PC-3 (cell line): ENCODE measurements at regions of chr15 and their contacts with region 1.

Region 1: DNA sequence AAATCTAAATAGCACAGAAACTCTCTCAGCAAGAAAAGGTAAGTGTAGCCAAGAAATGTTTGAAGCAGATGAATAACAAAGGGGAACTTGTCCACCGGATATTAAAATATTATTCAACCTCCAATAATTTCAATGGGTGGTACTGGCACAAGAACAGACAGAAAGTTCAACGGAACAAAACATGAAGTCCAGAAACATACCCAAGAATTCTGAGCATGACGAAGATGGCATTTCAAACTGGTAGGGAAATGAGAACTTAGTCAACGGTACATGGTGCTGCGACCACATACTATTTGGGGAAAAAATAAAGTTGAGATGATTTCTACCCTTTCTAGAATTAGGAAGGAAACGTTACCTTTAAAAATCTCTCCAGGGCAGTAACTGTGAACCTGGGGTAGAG is 5.5 kb downstream of the CHSY1 start:
- DNase-seq: no peak
- ATAC-seq: no peak
- H3K4me3 ChIP-seq: no peak overlapping the region
- H3K27ac ChIP-seq: no peak overlapping the region
- H3K4me1 ChIP-seq: peaks cover 11% of the 10 kb centered on the region
- H3K27me3 ChIP-seq: no peaks in the 10 kb centered on the region
- CTCF ChIP-seq: no peak

Region 2: GRCh38 chr15:101092156-101092866 is 154.1 kb before region 1 on chr15:
- CTCF ChIA-PET with region 1: no interaction called
- POLR2A ChIA-PET with region 1: no interaction called
- intact Hi-C with region 1: no loop called
- DNase-seq: no peak
- ATAC-seq: no peak
- H3K4me3 ChIP-seq: no peak overlapping the region
- H3K27ac ChIP-seq: no peak overlapping the region
- H3K4me1 ChIP-seq: no peaks in the 10 kb centered on the region
- H3K27me3 ChIP-seq: no peaks in the 10 kb centered on the region
- CTCF ChIP-seq: no peak

Region 3: GRCh38 chr15:101221902-101222301 is 24.5 kb before region 1 on chr15:
- CTCF ChIA-PET with region 1: no interaction called
- POLR2A ChIA-PET with region 1: interaction called, 16 read pairs
- intact Hi-C with region 1: no loop called
- DNase-seq: no peak
- ATAC-seq: no peak
- H3K4me3 ChIP-seq: no peak overlapping the region
- H3K27ac ChIP-seq: no peak overlapping the region
- H3K4me1 ChIP-seq: no peaks in the 10 kb centered on the region
- H3K27me3 ChIP-seq: no peaks in the 10 kb centered on the region
- CTCF ChIP-seq: no peak

Region 4: DNA sequence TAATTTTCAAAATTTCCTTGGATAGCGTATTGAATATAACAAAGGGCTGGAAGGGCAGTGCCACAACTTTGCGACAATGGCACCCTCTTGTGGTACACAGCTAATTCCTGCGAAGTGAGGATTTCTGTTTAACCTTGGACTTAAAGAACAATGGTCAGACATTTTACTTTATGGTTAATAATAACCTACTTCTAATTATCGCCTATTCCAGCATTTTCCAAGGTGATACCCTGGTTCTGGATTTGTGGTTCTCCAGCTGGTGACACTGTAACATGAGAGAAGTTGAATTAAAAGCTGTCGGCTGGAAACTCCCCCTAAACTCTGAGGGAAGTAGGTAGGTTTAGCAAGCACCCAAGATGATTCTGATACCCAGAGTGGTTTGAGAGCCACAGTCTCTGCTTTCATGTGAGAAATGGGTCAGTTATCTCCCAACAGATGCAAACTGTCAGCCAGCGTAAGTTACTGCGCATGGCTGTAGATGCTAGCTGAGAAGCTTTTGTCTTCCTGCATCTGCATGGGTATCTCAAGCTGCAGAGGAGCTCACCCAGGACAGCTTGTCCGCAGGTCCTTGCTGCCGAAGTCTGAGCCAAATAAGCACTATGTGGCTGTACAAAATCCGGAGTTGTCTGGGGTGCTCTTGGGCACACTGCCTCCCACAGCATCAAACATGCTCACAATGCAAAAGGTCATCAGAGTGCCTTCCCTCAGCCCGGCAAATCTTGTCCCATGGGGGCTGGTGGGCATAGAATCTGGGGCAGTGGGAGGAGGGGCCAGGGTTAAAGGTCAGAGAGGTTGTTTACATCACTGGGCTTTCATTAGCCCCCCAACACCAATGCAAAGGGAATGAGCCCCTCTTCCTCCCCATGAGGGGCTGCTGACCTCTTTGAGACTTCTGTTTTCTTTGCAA is 12.1 kb after region 1 on chr15:
- CTCF ChIA-PET with region 1: no interaction called
- POLR2A ChIA-PET with region 1: no interaction called
- intact Hi-C with region 1: no loop called
- DNase-seq: peak; percentile 80
- ATAC-seq: peak; percentile 87
- H3K4me3 ChIP-seq: peak overlapping the region; percentile 34; the same call in 1 of the 2 replicates
- H3K27ac ChIP-seq: no peak overlapping the region
- H3K4me1 ChIP-seq: no peaks in the 10 kb centered on the region
- H3K27me3 ChIP-seq: no peaks in the 10 kb centered on the region
- CTCF ChIP-seq: peak; percentile 95